ENCODE measurements at regions of chr12 and their contacts with region 1.

Region 1: GRCh38 chr12:47216150-47216677 is 136.5 kb upstream of the AMIGO2 start:
- DNase-seq: peak; percentile 92
- H3K4me3 ChIP-seq: peak overlapping the region; percentile 74
- H3K27ac ChIP-seq: peak overlapping the region; percentile 92
- H3K4me1 ChIP-seq: peaks cover 59% of the 10 kb centered on the region
- CTCF ChIP-seq: 0 out of 2 replicates have a peak, but pooled peaks have one; percentile 19

Region 2: DNA sequence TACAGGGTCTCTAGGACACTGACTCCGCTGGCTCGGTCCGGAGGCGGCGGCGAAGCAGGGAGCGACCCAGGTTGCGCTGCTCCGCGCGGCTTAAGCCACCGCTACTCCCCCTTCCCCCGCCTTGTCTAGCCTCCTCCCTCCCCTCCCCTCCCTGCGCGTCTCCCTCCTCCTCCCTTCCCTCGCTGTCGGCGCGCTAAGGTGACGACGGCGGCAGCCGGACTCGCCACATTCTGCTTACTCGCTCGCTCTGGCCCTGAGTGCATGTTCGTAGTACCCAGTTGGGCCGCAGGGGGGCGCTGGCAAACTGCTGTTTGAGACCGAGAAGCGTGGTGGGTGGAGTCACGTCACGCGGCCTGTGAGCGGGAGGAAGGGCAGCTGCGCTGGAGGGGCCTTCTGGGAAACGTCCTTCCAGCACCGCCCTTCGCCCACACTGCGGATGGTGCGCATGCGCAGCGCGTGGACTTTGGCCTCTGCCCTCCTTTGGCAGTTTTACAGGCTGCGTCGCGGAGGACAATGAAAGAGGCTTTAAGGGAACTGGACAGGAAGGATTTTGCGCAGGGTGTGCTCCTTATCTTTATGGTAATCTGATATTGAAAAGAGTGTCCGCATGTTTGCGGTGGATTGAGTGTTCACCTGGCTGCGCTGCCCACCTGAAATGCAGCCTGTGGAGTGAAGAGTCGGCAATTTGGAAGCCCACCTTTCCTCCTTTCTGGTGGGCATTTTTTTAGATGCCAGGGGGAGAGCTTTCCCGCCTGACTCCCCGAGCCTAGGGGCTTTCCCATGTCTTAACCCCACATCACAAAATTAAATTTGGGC is 1225.5 kb before region 1 on chr12 and contains the start of gene SCAF11:
- CTCF ChIA-PET with region 1: no interaction called
- POLR2A ChIA-PET with region 1: interaction called, 4 read pairs
- intact Hi-C with region 1: loop called (anchors 5 kb)
- DNase-seq: peak; percentile 99
- H3K4me3 ChIP-seq: peak within 1 kb of the TSS; percentile 78
- H3K27ac ChIP-seq: peak within 1 kb of the TSS; percentile 92
- H3K4me1 ChIP-seq: peaks cover 37% of the 10 kb centered on the region
- CTCF ChIP-seq: peak; percentile 85
- total RNA-seq, gene SCAF11: 115 and 130 TPM in 2 replicates

Region 3: GRCh38 chr12:46382964-46383653 is 833.1 kb before region 1 on chr12:
- CTCF ChIA-PET with region 1: no interaction called
- POLR2A ChIA-PET with region 1: interaction called, 5 read pairs
- intact Hi-C with region 1: loop called (anchors 10 kb)
- DNase-seq: peak; percentile 86
- H3K4me3 ChIP-seq: peak overlapping the region; percentile 74
- H3K27ac ChIP-seq: peak overlapping the region; percentile 28
- H3K4me1 ChIP-seq: peaks cover 46% of the 10 kb centered on the region
- CTCF ChIP-seq: peak; percentile 61

Region 4: GRCh38 chr12:46963977-46964971 is 251.9 kb before region 1 on chr12:
- CTCF ChIA-PET with region 1: no interaction called
- POLR2A ChIA-PET with region 1: no interaction called
- intact Hi-C with region 1: no loop called
- DNase-seq: no peak
- H3K4me3 ChIP-seq: no peak overlapping the region
- H3K27ac ChIP-seq: no peak overlapping the region
- H3K4me1 ChIP-seq: no peaks in the 10 kb centered on the region
- CTCF ChIP-seq: no peak

Region 5: GRCh38 chr12:47270782-47271664 is 54.8 kb after region 1 on chr12:
- CTCF ChIA-PET with region 1: no interaction called
- POLR2A ChIA-PET with region 1: interaction called, 10 read pairs
- intact Hi-C with region 1: loop called (anchors 2 kb)
- DNase-seq: no peak
- H3K4me3 ChIP-seq: no peak overlapping the region
- H3K27ac ChIP-seq: no peak overlapping the region
- H3K4me1 ChIP-seq: peaks cover 51% of the 10 kb centered on the region
- CTCF ChIP-seq: no peak

Region 6: DNA sequence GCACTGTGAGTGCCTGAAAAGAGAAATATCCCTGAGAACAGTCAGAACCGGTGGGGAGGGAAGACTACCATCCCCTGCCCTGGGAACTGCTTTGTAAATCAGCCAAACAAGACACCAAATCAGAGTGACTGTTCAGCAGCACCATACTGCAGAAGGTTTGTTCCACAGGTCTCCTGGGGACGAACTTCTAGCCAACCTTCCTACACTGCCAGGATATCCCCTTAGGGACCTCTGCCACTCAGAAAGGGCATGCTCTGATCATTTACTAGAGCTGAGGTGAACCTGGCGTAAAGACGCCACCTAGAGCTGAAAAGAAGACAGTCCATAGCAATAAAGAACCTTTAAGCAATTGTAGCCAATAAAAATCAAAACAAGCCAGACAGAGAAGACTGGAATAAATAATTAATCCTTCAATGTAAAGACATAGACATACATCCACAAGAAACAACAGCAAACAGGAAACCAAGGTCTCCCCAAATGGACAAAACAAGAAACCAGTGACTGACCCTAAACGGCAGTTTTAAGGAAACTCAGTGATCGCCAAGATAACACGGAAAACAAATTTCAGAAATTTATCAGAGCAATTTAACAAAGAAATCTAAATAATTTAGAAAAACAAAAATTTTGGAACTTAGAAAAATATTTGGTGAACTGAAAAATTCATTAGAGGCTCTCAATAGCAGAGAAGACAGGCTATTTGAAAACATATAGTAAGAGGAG is 91.6 kb after region 1 on chr12:
- CTCF ChIA-PET with region 1: no interaction called
- POLR2A ChIA-PET with region 1: interaction called, 4 read pairs
- intact Hi-C with region 1: loop called (anchors 1 kb)
- DNase-seq: peak; percentile 76
- H3K4me3 ChIP-seq: no peak overlapping the region
- H3K27ac ChIP-seq: no peak overlapping the region
- H3K4me1 ChIP-seq: peaks cover 15% of the 10 kb centered on the region
- CTCF ChIP-seq: peak; percentile 96

Region 7: DNA sequence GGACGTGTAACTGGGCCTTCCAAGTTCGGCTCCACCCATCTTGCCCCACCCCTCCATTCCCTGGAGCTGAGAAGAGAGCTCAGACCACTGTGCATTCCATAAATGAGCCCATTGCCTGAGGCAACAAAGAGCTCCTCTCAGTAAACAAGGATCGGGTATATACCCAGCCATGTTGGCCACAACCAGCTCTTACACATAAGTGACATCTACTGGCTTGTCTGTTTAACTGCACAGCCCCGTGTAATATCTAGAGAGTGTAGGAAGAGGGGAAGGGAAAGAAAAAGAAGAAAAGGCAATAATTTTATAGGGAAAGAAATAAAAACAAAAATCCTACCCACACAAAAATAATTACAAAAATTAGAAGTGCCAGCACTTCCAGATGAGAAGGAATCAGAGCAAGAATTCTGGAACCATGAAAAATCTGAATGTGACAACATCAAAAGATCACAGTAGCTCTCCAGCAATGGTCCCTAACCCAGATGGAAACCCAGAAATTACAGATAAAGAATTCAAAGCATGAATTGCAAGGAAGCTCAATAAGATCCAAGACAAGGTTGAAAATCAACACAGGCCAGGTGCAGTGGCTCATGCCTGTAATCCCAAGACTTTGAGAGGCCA is 181.6 kb after region 1 on chr12:
- CTCF ChIA-PET with region 1: no interaction called
- POLR2A ChIA-PET with region 1: no interaction called
- intact Hi-C with region 1: loop called (anchors 2 kb)
- DNase-seq: peak; percentile 60
- H3K4me3 ChIP-seq: no peak overlapping the region
- H3K27ac ChIP-seq: no peak overlapping the region
- H3K4me1 ChIP-seq: no peaks in the 10 kb centered on the region
- CTCF ChIP-seq: peak; percentile 86

Region 8: DNA sequence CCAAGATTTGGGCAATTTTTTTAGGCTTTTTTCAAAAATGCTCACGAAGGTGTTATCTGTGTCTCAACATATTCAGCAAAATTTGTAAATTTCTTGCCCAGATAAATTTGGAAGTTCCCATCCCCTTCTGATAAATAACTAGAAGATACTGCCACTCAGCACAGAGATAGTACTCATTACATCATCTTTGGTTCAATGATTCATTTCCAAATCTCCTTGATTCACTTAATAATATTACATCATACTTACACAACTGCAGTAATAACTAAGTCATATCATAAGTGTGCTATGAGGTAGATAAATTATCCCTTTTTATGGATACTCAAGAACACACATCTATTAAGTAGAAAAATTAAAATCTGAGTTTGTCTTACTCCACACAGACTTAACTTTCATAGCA is 400.2 kb after region 1 on chr12:
- CTCF ChIA-PET with region 1: no interaction called
- POLR2A ChIA-PET with region 1: no interaction called
- intact Hi-C with region 1: no loop called
- DNase-seq: no peak
- H3K4me3 ChIP-seq: no peak overlapping the region
- H3K27ac ChIP-seq: no peak overlapping the region
- H3K4me1 ChIP-seq: no peaks in the 10 kb centered on the region
- CTCF ChIP-seq: no peak

Region 9: GRCh38 chr12:47812797-47813510 is 596.7 kb after region 1 on chr12:
- CTCF ChIA-PET with region 1: no interaction called
- POLR2A ChIA-PET with region 1: interaction called, 4 read pairs
- intact Hi-C with region 1: loop called (anchors 5 kb)
- DNase-seq: peak; percentile 96
- H3K4me3 ChIP-seq: peak overlapping the region; percentile 66
- H3K27ac ChIP-seq: peak overlapping the region; percentile 96
- H3K4me1 ChIP-seq: peaks cover 98% of the 10 kb centered on the region
- CTCF ChIP-seq: peak; percentile 36; the same call in 1 of the 2 replicates

Measured in OCI-LY7 (cell line).